Activated CD8-positive, alpha-beta T cell treated with anti-CD3 and anti-CD28 coated beads for 36 hours (primary cell): ENCODE measurements at regions of chr22 and their contacts with region 1.

Region 1: GRCh38 chr22:26672590-26673468 is 15.4 kb downstream of the MIAT start:
- DNase-seq: peak; percentile 97
- ATAC-seq: peak; percentile 75
- H3K4me3 Mint-ChIP-seq: peak overlapping the region; percentile 94
- H3K27ac Mint-ChIP-seq: peak overlapping the region; percentile 95
- H3K4me1 Mint-ChIP-seq: peaks cover 65% of the 10 kb centered on the region
- H3K27me3 Mint-ChIP-seq: no peaks in the 10 kb centered on the region
- CTCF ChIP-seq: peak; percentile 12

Region 2: GRCh38 chr22:26461188-26461810 is 211.5 kb before region 1 on chr22:
- CTCF ChIA-PET with region 1: no interaction called
- POLR2A ChIA-PET with region 1: no interaction called
- intact Hi-C with region 1: no loop called
- DNase-seq: peak; percentile 56
- ATAC-seq: peak; percentile 27
- H3K4me3 Mint-ChIP-seq: no peak overlapping the region
- H3K27ac Mint-ChIP-seq: no peak overlapping the region
- H3K4me1 Mint-ChIP-seq: no peaks in the 10 kb centered on the region
- H3K27me3 Mint-ChIP-seq: no peaks in the 10 kb centered on the region
- CTCF ChIP-seq: peak; percentile 80

Region 3: GRCh38 chr22:26483439-26484359 is 189.1 kb before region 1 on chr22 and contains the starts of genes HPS4 and SRRD:
- CTCF ChIA-PET with region 1: interaction called, 13 read pairs
- POLR2A ChIA-PET with region 1: interaction called, 16 read pairs
- intact Hi-C with region 1: no loop called
- DNase-seq: peak; percentile 92
- ATAC-seq: peak; percentile 81
- H3K4me3 Mint-ChIP-seq: peak within 1 kb of the TSS; percentile 94
- H3K27ac Mint-ChIP-seq: peak within 1 kb of the TSS; percentile 98
- H3K4me1 Mint-ChIP-seq: peaks cover 61% of the 10 kb centered on the region
- H3K27me3 Mint-ChIP-seq: no peaks in the 10 kb centered on the region
- CTCF ChIP-seq: no peak
- total RNA-seq, gene HPS4: 51.8 to 53.5 TPM
- total RNA-seq, gene SRRD: 24.8 to 26.3 TPM

Region 4: GRCh38 chr22:26658671-26659478 is 14.0 kb before region 1 on chr22:
- CTCF ChIA-PET with region 1: interaction called, 10 read pairs
- POLR2A ChIA-PET with region 1: interaction called, 33 read pairs
- intact Hi-C with region 1: no loop called
- DNase-seq: peak; percentile 93
- ATAC-seq: peak; percentile 82
- H3K4me3 Mint-ChIP-seq: peak overlapping the region; percentile 83
- H3K27ac Mint-ChIP-seq: peak overlapping the region; percentile 87
- H3K4me1 Mint-ChIP-seq: peaks cover 30% of the 10 kb centered on the region
- H3K27me3 Mint-ChIP-seq: peaks cover 4% of the 10 kb centered on the region
- CTCF ChIP-seq: no peak